Vagina (tissue), 2 donors: ENCODE measurements at regions of chr3 and their contacts with region 1.

Region 1: GRCh38 chr3:4826237-4827100 is 152.8 kb upstream of the BHLHE40 start:
- DNase-seq: no peak
- H3K4me3 ChIP-seq: no peak overlapping the region
- H3K27ac ChIP-seq: peak overlapping the region; percentile 79
- H3K4me1 ChIP-seq: peaks cover 75% of the 10 kb centered on the region
- H3K27me3 ChIP-seq: no peaks in the 10 kb centered on the region
- CTCF ChIP-seq: no peak
- POLR2A ChIP-seq: no peak

Region 2: GRCh38 chr3:4748701-4749378 is 77.6 kb before region 1 on chr3:
- intact Hi-C with region 1: loop called (anchors 5 kb)
- DNase-seq: no peak
- H3K4me3 ChIP-seq: no peak overlapping the region
- H3K27ac ChIP-seq: no peak overlapping the region
- H3K4me1 ChIP-seq: peaks cover 47% of the 10 kb centered on the region
- H3K27me3 ChIP-seq: no peaks in the 10 kb centered on the region
- CTCF ChIP-seq: no peak
- POLR2A ChIP-seq: no peak